Activated naive CD4-positive, alpha-beta T cell treated with anti-CD3 and anti-CD28 coated beads for 36 hours (primary cell): ENCODE measurements at regions of chr6 and their contacts with region 1.

Region 1: DNA sequence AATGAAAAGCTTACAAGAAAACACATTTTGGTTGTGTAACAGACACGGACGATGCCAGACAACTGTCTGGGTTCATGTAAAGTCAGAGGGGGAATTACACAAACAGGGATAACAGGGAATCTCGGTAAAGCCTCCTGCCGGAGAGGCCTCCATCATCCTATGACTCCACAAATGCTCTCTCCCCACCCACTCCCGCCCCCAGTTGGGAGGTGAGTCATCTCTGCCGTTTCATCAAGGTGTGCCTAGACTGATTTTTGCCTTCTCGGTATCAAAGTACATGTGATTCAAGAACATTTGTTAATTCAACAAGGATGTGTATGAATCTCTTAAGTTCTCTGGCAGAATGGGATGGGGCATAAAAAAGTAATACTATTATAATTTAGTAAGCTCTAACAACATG is 304.9 kb upstream of the PRDM1 start:
- DNase-seq: peak; percentile 77
- H3K4me3 Mint-ChIP-seq: no peak overlapping the region
- H3K27ac Mint-ChIP-seq: no peak overlapping the region
- H3K4me1 Mint-ChIP-seq: peaks cover 34% of the 10 kb centered on the region
- H3K27me3 Mint-ChIP-seq: no peaks in the 10 kb centered on the region

Region 2: DNA sequence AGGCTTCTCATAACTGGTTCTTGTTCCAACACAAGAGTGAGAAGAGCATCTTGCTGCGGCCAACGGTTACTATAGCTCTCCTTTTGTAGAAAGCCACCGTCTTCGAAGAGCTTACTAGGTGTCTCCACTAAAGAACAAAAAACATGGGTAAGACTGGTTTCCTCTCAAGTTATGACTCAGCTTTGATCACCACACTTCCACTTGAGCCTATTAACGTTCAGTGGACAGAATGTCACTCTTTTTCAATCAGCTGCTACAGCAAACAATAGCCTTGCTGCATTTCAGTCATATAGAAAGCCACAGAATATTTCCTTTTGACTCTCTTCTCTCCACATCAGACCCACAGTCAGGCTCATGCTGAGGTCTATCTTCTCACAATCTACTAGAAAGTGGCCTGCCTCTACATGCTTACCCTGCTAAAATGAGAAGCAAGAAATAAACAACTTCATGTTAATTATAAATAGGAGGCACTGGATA is 134.8 kb before region 1 on chr6:
- CTCF ChIA-PET with region 1: no interaction called
- intact Hi-C with region 1: loop called (anchors 1 kb)
- DNase-seq: peak; percentile 35
- H3K4me3 Mint-ChIP-seq: no peak overlapping the region
- H3K27ac Mint-ChIP-seq: no peak overlapping the region
- H3K4me1 Mint-ChIP-seq: peaks cover 46% of the 10 kb centered on the region
- H3K27me3 Mint-ChIP-seq: peaks cover 20% of the 10 kb centered on the region

Region 3: GRCh38 chr6:105793130-105793529 is 11.9 kb after region 1 on chr6:
- CTCF ChIA-PET with region 1: interaction called, 3 read pairs
- intact Hi-C with region 1: loop called (anchors 1 kb)
- DNase-seq: peak; percentile 30
- H3K4me3 Mint-ChIP-seq: no peak overlapping the region
- H3K27ac Mint-ChIP-seq: no peak overlapping the region
- H3K4me1 Mint-ChIP-seq: peaks cover 43% of the 10 kb centered on the region
- H3K27me3 Mint-ChIP-seq: no peaks in the 10 kb centered on the region